Naive thymus-derived CD4-positive, alpha-beta T cell (primary cell): ENCODE measurements at regions of chr1 and their contacts with region 1.

Region 1: GRCh38 chr1:93179886-93180722 is at the start of gene TMED5:
- DNase-seq: peak; percentile 94 to 97 (median 96)
- ATAC-seq: peak; percentile 89
- H3K4me3 ChIP-seq: peak within 1 kb of the TSS; percentile 95
- H3K4me3 Mint-ChIP-seq: peak within 1 kb of the TSS; percentile 91 to 98 (median 94)
- H3K27ac ChIP-seq: peak within 1 kb of the TSS; percentile 91
- H3K27ac Mint-ChIP-seq: peak within 1 kb of the TSS; percentile 86 to 99 (median 97)
- H3K4me1 ChIP-seq: peaks cover 24 to 30% of the 10 kb centered on the region in 2 donors
- H3K4me1 Mint-ChIP-seq: peaks cover 30 to 59% (median 47%) of the 10 kb centered on the region in 7 donors
- H3K27me3 ChIP-seq: no peaks in the 10 kb centered on the region
- H3K27me3 Mint-ChIP-seq: no peaks in the 10 kb centered on the region
- total RNA-seq, gene TMED5: 37.8 to 60.0 (median 47.4) TPM

Region 2: DNA sequence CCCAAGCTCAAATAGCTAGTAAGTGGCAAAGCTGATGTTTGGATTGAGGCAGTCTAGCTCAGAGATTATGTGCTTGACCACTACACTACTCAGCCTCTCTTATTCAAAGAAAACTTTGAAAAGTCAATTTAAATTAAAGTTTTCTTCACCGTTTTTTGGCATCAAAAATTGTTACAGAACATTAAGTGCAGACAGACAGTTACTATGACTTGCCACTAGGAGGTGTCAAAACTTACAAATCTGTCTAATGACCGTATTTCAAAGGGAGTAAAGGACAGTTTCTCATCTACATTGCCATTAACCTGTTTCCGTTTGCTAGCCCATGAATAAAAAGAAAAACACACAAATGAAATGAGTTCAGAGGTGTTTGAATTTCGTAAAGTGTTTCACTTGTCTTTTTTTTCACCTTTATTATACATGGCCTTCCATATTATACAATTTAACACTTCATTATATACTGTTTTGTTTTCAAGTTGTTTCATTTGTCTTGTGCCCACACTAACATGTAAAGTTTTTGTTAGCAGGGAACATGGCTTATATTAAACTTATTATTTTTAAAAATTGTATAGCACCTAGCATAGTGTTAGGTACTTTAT is 158.5 kb before region 1 on chr1:
- CTCF ChIA-PET with region 1: no interaction called
- POLR2A ChIA-PET with region 1: no interaction called
- intact Hi-C with region 1: loop called (anchors 1 to 5 kb)
- DNase-seq: peak in 7 of 9 donors; percentile 16 to 64 (median 55)
- ATAC-seq: peak; percentile 78
- H3K4me3 ChIP-seq: no peak overlapping the region
- H3K4me3 Mint-ChIP-seq: no peak overlapping the region
- H3K27ac ChIP-seq: no peak overlapping the region
- H3K27ac Mint-ChIP-seq: no peak overlapping the region
- H3K4me1 ChIP-seq: peaks cover 0 to 4% of the 10 kb centered on the region in 2 donors
- H3K4me1 Mint-ChIP-seq: peaks cover 0 to 7% (median 5%) of the 10 kb centered on the region in 7 donors
- H3K27me3 ChIP-seq: no peaks in the 10 kb centered on the region
- H3K27me3 Mint-ChIP-seq: peaks cover 0 to 48% (median 3%) of the 10 kb centered on the region in 5 donors

Region 3: DNA sequence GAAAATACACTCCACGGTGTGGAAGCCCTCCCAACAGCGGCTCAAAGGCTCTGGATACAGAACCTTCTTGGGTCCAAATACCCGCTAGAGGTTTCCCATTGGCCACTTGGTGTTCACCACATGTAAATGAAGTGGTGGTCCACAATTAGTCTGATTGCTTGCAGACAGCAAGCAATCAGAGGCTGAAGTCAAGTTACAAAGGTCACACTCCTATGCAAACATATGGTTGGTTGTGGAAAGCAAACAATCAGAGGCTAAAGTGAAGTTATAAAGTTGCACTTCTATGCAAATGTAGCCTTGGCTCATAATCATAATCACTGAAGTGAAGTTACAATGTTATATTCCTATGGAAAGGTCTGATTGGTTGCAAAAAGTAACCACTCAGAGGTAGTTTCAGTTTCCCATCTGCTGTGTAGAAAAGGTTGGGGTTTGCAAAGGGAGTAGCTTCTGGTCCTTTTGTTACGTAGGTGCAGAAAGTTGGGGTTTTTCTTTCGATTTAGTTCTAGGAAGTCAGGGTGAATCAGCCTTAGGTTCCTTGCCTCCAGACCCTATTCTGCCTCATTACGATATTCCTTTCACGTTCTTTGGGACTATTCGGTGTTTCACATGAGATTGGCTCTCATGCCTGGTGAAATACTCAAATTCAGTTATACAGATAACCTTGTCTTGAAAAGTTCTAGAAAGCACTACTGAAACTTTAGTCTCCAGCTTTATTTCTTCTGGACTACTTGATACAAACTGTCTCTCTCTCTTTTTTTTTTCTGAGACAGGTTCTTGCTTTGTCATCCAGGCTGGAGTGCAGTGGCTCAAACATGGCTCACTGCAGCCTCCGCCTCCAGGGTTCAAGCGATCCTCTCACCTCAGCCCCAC is 137.7 kb before region 1 on chr1:
- CTCF ChIA-PET with region 1: no interaction called
- POLR2A ChIA-PET with region 1: no interaction called
- intact Hi-C with region 1: loop called (anchors 1 kb)
- DNase-seq: peak in 8 of 9 donors; percentile 27 to 87 (median 79)
- ATAC-seq: peak; percentile 99
- H3K4me3 ChIP-seq: peak overlapping the region; percentile 38
- H3K4me3 Mint-ChIP-seq: peak overlapping the region; percentile 42 to 89 (median 82)
- H3K27ac ChIP-seq: peak overlapping the region; percentile 78
- H3K27ac Mint-ChIP-seq: peak overlapping the region; percentile 88 to 98 (median 94)
- H3K4me1 ChIP-seq: peaks cover 9 to 10% of the 10 kb centered on the region in 2 donors
- H3K4me1 Mint-ChIP-seq: peaks cover 7 to 38% (median 14%) of the 10 kb centered on the region in 7 donors
- H3K27me3 ChIP-seq: no peaks in the 10 kb centered on the region
- H3K27me3 Mint-ChIP-seq: no peaks in the 10 kb centered on the region

Region 4: GRCh38 chr1:93155335-93155734 is 24.8 kb before region 1 on chr1:
- CTCF ChIA-PET with region 1: no interaction called
- POLR2A ChIA-PET with region 1: no interaction called
- intact Hi-C with region 1: loop called (anchors 2 kb)
- DNase-seq: no peak
- ATAC-seq: peak; percentile 31
- H3K4me3 ChIP-seq: no peak overlapping the region
- H3K4me3 Mint-ChIP-seq: peak overlapping the region in 1 of 10 donors; percentile 7
- H3K27ac ChIP-seq: no peak overlapping the region
- H3K27ac Mint-ChIP-seq: peak overlapping the region in 6 of 9 donors; percentile 7 to 85 (median 77)
- H3K4me1 ChIP-seq: no peaks in the 10 kb centered on the region
- H3K4me1 Mint-ChIP-seq: peaks cover 0 to 26% (median 9%) of the 10 kb centered on the region in 7 donors
- H3K27me3 ChIP-seq: no peaks in the 10 kb centered on the region
- H3K27me3 Mint-ChIP-seq: no peaks in the 10 kb centered on the region

Region 5: GRCh38 chr1:93567255-93567918 is 387.3 kb after region 1 on chr1:
- CTCF ChIA-PET with region 1: no interaction called
- POLR2A ChIA-PET with region 1: no interaction called
- intact Hi-C with region 1: no loop called
- DNase-seq: no peak
- ATAC-seq: no peak
- H3K4me3 ChIP-seq: no peak overlapping the region
- H3K4me3 Mint-ChIP-seq: no peak overlapping the region
- H3K27ac ChIP-seq: no peak overlapping the region
- H3K27ac Mint-ChIP-seq: no peak overlapping the region
- H3K4me1 ChIP-seq: no peaks in the 10 kb centered on the region
- H3K4me1 Mint-ChIP-seq: no peaks in the 10 kb centered on the region
- H3K27me3 ChIP-seq: no peaks in the 10 kb centered on the region
- H3K27me3 Mint-ChIP-seq: peaks cover 0 to 5% (median 0%) of the 10 kb centered on the region in 5 donors

Region 6: DNA sequence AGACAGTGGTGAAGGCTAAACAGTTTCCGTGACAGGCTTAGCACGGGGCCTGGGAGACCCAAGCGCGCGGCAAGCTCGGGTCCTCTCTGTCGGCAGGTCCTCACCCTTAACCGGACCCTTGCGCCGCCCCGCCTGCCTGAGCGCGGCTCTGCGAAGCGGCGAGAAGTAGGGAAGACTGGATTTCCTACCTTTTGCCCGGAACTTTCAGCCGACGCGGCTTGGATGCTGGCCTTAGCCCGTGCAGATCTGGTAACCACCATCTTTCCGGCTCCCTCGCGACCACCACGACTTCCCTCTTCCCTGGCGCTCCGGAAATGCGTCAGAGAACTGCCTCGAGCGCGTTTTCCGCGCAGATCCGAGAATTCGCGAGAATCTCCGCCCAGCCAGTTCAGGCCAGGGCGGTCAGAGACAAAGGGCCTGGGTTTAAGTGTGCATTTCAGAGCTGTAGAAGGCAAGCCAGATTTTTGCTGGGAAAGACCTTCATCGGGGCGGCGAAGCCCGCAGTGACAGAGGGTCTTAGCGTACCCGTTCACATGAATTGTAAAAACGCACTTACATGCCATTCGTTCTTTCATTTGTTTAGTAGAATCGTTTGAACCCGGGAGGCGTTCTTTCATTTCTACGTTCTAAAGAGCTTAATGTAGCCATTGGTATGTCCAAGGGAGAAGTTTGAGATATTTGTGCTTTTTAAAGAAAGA is 698.9 kb after region 1 on chr1 and contains the start of gene DNTTIP2:
- CTCF ChIA-PET with region 1: no interaction called
- POLR2A ChIA-PET with region 1: interaction called, 3 read pairs
- intact Hi-C with region 1: loop called in 1 of 2 experiments (anchors 1 kb)
- DNase-seq: peak; percentile 73 to 89 (median 86)
- ATAC-seq: peak; percentile 90
- H3K4me3 ChIP-seq: peak within 1 kb of the TSS; percentile 83
- H3K4me3 Mint-ChIP-seq: peak within 1 kb of the TSS; percentile 92 to 99 (median 97)
- H3K27ac ChIP-seq: peak within 1 kb of the TSS; percentile 94
- H3K27ac Mint-ChIP-seq: peak within 1 kb of the TSS; percentile 96 to 99 (median 98)
- H3K4me1 ChIP-seq: peaks cover 21 to 25% of the 10 kb centered on the region in 2 donors
- H3K4me1 Mint-ChIP-seq: peaks cover 34 to 62% (median 54%) of the 10 kb centered on the region in 7 donors
- H3K27me3 ChIP-seq: no peaks in the 10 kb centered on the region
- H3K27me3 Mint-ChIP-seq: no peaks in the 10 kb centered on the region
- total RNA-seq, gene DNTTIP2: 51.8 to 84.2 (median 77.5) TPM